T-cell (primary cell): ENCODE measurements at regions of chr9 and their contacts with region 1.

Region 1: DNA sequence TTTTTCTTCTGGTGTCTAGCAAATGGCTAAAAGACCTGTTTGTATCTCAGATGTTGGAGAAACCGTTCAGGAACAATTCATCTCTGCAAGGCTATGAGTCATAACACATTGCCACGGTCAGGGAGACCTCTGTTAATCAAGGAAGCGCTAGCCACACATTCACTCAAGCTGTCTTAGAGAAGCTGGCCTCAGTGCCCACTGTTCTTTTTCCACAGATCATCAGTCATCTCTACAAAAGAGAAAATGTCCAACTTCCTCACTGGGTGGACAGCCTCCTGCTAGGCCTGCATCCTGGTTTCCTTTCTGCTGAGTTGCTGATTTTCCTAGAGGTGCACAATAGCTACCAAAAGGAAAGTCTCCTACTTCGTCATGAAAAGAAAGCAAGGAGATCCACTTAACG is 360.5 kb downstream of the BNC2 start:
- DNase-seq: no peak
- ATAC-seq: no peak
- H3K4me3 ChIP-seq: no peak overlapping the region
- H3K4me3 Mint-ChIP-seq: no peak overlapping the region
- H3K27ac ChIP-seq: no peak overlapping the region
- H3K27ac Mint-ChIP-seq: no peak overlapping the region
- H3K4me1 ChIP-seq: no peaks in the 10 kb centered on the region
- H3K4me1 Mint-ChIP-seq: no peaks in the 10 kb centered on the region
- H3K27me3 ChIP-seq: no peaks in the 10 kb centered on the region
- H3K27me3 Mint-ChIP-seq: no peaks in the 10 kb centered on the region

Region 2: DNA sequence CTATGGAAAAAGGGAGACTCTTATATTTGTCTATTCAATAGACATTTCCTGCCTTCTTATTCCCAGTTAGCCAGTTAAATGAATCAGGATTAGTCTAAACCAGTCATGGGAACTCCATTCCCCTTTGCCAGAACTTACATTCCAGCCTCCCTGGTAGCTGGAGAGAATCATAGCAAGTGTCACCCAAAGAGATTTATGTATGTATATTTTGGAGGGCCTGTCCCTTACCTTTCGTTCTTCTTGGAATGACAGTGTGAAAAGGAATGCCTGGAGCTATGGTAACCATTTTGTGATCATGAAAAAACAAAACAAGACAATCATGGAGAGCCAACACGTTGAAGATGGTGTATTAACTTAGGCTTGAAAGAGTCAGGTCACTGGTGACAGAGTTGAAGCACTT is 329.5 kb before region 1 on chr9:
- CTCF ChIA-PET with region 1: no interaction called
- POLR2A ChIA-PET with region 1: interaction called in 1 of 2 experiments, 11 read pairs
- DNase-seq: no peak
- ATAC-seq: no peak
- H3K4me3 ChIP-seq: no peak overlapping the region
- H3K4me3 Mint-ChIP-seq: no peak overlapping the region
- H3K27ac ChIP-seq: no peak overlapping the region
- H3K27ac Mint-ChIP-seq: no peak overlapping the region
- H3K4me1 ChIP-seq: peaks cover 0 to 43% of the 10 kb centered on the region in 2 experiments
- H3K4me1 Mint-ChIP-seq: peaks cover 0 to 2% (median 0%) of the 10 kb centered on the region in 3 donors
- H3K27me3 ChIP-seq: no peaks in the 10 kb centered on the region
- H3K27me3 Mint-ChIP-seq: no peaks in the 10 kb centered on the region